ENCODE measurements at regions of chr3 and their contacts with region 1.

Region 1: DNA sequence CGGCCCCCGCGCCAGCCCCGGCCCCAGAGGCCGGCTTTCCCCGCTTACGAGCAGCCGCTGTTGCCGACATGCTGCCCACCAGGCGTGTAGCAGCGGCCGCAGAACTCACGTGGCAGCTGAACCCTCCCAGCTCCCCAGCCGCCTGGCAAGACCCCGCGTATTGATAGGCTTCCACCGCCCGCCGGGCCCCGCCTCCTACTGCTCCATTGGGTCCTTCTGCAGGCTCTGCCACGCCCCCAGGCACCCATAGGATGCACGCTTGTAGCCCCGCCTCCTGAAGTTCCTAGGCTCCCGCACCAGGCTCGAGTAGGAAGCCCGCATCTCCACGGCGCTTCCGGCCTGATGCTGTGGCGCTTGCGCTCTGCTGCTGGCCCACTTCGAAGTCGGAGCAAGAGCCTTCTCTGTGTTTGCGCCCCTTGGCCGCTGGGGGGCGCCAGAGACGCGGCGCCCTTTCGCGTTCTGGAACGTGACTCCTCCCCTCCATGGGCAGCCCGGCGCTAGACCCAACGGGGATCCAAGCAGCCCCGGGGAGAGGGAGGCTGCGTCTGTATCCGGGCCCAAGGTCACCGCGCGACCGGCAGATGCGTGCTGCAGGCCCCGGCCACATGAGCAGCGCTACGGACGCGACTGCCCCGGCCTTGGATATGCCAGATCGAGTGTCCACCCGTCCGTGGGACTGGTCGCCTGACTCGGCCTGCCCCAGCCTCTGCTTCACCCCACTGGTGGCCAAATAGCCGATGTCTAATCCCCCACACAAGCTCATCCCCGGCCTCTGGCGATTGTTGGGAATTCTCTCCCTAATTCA is at the starts of genes PARP3 and RRP9:
- DNase-seq: peak; percentile 100
- H3K4me3 ChIP-seq: peak within 1 kb of the TSS; percentile 77 to 91
- H3K27ac ChIP-seq: peak within 1 kb of the TSS; percentile 97 to 98
- H3K4me1 ChIP-seq: peaks cover 14 to 23% of the 10 kb centered on the region in 2 donors
- H3K27me3 ChIP-seq: no peaks in the 10 kb centered on the region
- CTCF ChIP-seq: peak; percentile 99
- total RNA-seq, gene PARP3: 29.5 TPM
- total RNA-seq, gene RRP9: 15.4 TPM

Region 2: GRCh38 chr3:51384726-51385473 is 557.1 kb before region 1 on chr3 and contains the start of gene MANF:
- intact Hi-C with region 1: loop called (anchors 10 kb)
- DNase-seq: peak; percentile 97 to 99
- H3K4me3 ChIP-seq: peak within 1 kb of the TSS; percentile 92
- H3K27ac ChIP-seq: peak within 1 kb of the TSS; percentile 92 to 98
- H3K4me1 ChIP-seq: peaks cover 5 to 28% of the 10 kb centered on the region in 2 donors
- H3K27me3 ChIP-seq: no peaks in the 10 kb centered on the region
- CTCF ChIP-seq: peak in 1 of 3 experiments; percentile 37
- total RNA-seq, gene MANF: 34.4 TPM

Region 3: GRCh38 chr3:51845129-51845528 is 96.9 kb before region 1 on chr3:
- intact Hi-C with region 1: no loop called
- DNase-seq: no peak
- H3K4me3 ChIP-seq: no peak overlapping the region
- H3K27ac ChIP-seq: no peak overlapping the region
- H3K4me1 ChIP-seq: no peaks in the 10 kb centered on the region
- H3K27me3 ChIP-seq: no peaks in the 10 kb centered on the region
- CTCF ChIP-seq: no peak

Region 4: GRCh38 chr3:51967384-51968169 is 25.6 kb after region 1 on chr3 and contains the start of gene PCBP4:
- intact Hi-C with region 1: loop called (anchors 2 kb)
- DNase-seq: peak in 1 of 2 donors; percentile 89
- H3K4me3 ChIP-seq: peak within 1 kb of the TSS; percentile 87 to 90
- H3K27ac ChIP-seq: peak within 1 kb of the TSS; percentile 95 to 96
- H3K4me1 ChIP-seq: peaks cover 8 to 35% of the 10 kb centered on the region in 2 donors
- H3K27me3 ChIP-seq: no peaks in the 10 kb centered on the region
- CTCF ChIP-seq: no peak
- total RNA-seq, gene PCBP4: 256 TPM

Region 5: DNA sequence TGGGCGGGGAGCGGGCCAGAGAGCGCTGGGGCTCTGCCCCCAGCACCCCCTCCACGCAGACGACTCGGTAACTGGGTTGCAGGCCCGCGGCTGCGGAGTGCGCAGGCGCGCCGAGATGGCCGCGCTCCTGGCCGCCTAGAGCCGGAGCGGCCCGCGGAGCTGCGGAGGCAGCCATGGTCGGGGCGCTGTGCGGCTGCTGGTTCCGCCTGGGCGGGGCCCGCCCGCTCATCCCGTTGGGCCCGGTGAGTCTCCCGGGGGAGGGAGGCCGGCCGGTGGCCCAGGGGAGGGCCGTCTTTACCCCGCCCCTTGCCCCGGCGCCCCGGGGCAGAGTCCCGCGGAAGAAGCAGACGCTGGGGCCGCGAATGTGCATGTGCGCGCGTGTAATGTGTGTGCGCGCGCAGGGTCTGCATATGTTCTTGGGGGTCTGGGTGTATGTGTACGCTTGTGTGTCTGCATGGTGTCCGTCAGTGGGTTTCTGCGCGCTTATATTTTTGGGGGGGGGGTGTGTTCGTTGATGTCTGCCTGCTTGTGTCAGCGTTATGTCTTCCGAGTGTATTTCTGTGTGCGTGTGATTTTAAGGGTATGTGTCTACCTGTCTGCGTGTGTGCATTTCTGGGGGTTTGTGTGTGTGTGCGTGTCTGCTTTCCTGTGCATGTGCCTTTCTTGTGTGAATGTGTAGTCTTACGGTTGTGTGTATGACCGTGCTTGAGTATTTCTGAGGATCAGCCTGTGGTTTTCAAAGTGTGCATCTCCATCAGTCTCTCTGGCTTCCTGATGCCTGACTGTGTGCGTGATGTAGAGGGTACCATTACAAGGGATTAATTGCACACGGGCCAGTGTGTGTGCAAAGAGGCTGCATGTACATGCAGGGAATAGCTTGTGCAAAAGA is 33.2 kb after region 1 on chr3 and contains the start of gene ABHD14A:
- intact Hi-C with region 1: loop called (anchors 1 kb)
- DNase-seq: peak in 1 of 2 donors; percentile 84
- H3K4me3 ChIP-seq: peak within 1 kb of the TSS; percentile 74 to 86
- H3K27ac ChIP-seq: peak within 1 kb of the TSS; percentile 96
- H3K4me1 ChIP-seq: peaks cover 6 to 17% of the 10 kb centered on the region in 2 donors
- H3K27me3 ChIP-seq: no peaks in the 10 kb centered on the region
- CTCF ChIP-seq: no peak
- total RNA-seq, gene ABHD14A: 37.4 TPM

Region 6: DNA sequence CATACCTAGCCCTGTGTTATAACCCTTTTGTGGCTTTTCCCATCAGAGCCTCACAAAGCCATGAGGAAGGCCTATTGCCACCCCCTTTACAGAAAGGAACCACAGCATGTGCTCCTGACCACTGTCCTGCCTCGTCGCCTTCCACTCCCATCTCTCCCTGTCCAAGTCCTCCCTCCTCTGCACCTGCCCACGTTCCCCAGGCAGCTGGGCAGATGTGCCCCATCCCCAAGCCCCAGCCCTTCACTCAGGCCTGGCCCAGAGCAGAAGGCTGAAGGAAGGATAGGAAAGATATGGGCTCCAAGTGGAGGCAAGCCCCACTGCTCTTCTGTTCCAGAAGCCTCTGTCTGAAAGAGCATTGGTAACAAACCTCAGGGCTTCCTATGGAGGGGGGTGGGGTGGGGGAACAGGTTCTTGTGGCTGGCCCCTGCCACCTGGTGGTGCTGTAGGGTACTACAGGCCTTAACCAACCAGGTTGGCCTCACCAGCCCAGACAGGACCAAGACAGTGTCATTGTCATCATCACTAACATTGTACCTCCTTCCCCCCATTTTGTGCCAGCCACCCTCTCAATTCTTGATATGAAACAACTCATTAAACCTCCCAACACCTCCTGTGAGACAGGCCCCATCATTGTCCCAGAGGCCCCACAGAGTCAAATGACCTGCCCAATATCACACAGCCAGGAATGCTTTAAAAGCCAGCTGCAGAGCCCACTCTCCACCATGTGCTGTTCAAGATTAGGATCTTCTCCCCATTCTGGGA is 202.2 kb after region 1 on chr3:
- intact Hi-C with region 1: loop called (anchors 1 kb)
- DNase-seq: peak in 1 of 2 donors; percentile 92
- H3K4me3 ChIP-seq: no peak overlapping the region
- H3K27ac ChIP-seq: no peak overlapping the region
- H3K4me1 ChIP-seq: no peaks in the 10 kb centered on the region
- H3K27me3 ChIP-seq: no peaks in the 10 kb centered on the region
- CTCF ChIP-seq: peak; percentile 95 to 98 (median 96)

Region 7: GRCh38 chr3:52270252-52270754 is 328.3 kb after region 1 on chr3:
- intact Hi-C with region 1: no loop called
- DNase-seq: no peak
- H3K4me3 ChIP-seq: no peak overlapping the region
- H3K27ac ChIP-seq: peak overlapping the region; percentile 13 to 56
- H3K4me1 ChIP-seq: peaks cover 3 to 35% of the 10 kb centered on the region in 2 donors
- H3K27me3 ChIP-seq: no peaks in the 10 kb centered on the region
- CTCF ChIP-seq: no peak

Region 8: DNA sequence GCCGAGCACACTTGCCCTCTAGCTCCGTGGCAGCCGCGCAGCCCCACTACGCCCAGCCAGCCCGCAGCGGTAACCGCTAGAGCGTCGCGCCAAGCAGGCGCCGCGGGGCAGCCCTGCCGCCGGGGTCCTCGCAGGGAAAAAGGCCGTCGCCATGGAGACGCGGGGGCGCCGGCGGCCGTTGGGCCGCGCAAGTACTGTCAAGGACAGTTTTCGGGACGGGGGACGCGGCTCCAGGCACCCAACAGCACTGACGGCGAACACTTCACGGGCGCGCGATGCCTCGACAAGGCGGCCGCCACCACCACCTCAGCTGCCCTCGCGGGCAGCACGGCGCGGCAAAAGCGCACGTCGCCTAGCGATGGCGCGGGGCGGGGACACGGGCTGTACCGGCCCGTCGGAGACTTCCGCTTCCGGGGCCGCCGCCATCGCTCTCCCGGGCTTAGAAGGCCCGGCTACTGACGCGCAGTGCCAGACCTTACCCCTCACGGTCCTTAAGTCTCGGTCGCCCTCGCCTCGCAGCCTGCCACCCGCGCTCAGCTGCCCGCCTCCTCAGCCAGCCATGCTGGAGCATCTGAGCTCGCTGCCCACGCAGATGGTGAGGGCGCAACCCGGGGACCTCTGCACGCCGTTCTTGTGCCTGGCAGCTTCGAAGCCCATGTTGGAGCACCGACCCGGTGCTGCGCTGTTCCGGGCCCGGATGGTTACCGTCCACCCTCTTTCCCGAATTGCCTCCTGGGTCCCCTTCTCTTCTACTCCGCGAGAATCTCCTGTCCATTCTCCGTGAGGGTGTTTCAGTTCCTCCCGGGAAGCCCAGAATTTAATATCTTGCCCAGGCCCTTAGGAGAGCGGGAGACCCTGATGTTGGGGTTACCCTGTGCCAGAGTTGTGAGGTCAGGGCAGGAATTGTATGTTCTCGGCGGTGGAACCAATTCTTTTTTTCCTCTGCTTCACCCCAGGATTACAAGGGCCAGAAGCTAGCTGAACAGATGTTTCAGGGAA is 764.0 kb after region 1 on chr3 and contains the starts of genes GLT8D1 and SPCS1:
- intact Hi-C with region 1: loop called (anchors 10 kb)
- DNase-seq: peak in 1 of 2 donors; percentile 89
- H3K4me3 ChIP-seq: peak within 1 kb of the TSS; percentile 85 to 86
- H3K27ac ChIP-seq: peak within 1 kb of the TSS; percentile 85 to 89
- H3K4me1 ChIP-seq: peaks cover 10 to 23% of the 10 kb centered on the region in 2 donors
- H3K27me3 ChIP-seq: no peaks in the 10 kb centered on the region
- CTCF ChIP-seq: no peak
- total RNA-seq, gene GLT8D1: 38.3 TPM
- total RNA-seq, gene SPCS1: 170 TPM

Measured in ascending aorta (tissue), 2 donors.